ENCODE measurements at regions of chr1 and their contacts with region 1.

Region 1: GRCh38 chr1:192477630-192478029 is 97.9 kb upstream of the RGS1 start:
- DNase-seq: no peak
- ATAC-seq: peak; percentile 76 to 77

Region 2: DNA sequence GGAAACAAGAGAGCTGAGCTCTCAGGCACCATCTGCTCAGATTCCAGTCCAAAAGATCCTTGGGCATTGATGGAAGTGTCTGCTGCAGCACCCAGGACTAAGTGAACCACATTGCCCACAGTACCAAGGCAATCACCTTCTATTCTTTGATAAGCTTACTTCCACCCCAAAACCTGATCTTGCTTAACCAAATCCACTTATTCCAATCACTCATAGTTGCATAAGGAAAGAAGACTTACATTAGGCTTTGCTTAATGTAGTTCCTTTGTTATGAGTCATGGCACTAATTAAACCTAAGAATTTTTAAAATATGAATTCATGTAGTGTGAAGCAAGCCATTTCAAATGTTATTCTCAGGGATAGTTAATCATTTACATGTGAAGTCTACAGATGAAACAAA is 497.1 kb after region 1 on chr1:
- intact Hi-C with region 1: no loop called
- DNase-seq: no peak
- ATAC-seq: no peak

Region 3: DNA sequence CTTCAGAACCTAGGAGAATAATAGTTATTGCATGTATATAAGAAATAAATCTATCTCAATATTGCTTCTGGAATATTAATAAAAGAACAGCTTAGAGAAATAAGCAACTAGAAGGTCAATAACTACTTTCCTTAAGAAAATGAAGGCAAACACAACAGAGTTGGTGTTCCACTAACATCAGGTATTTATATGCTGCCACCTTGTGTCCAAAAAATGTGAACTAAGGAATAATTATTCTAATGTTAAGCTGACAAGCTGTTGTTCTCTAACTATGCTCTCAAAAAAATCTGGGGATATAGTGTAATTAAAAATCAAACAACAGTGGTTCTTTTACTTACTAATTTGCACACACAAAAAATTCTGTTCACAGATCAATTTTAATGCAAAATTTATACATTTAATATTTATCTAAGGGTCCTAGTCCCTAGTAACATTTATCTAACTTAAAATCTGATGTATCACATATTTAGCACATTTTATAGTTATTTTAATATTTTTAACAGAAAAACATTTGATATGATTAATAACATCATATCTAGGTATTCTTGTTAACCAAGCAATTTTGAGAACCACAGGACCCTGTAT is 541.9 kb after region 1 on chr1:
- intact Hi-C with region 1: loop called in 1 of 2 experiments (anchors 5 kb)
- DNase-seq: no peak
- ATAC-seq: peak; percentile 58 to 70

Measured in left cardiac atrium (tissue), 4 donors.